H1 (cell line): ENCODE measurements at regions of chr7 and their contacts with region 1.

Region 1: GRCh38 chr7:116236020-116236630 is 25.8 kb downstream of the TES start:
- DNase-seq: no peak
- H3K4me3 ChIP-seq: no peak overlapping the region
- H3K27ac ChIP-seq: no peak overlapping the region
- H3K4me1 ChIP-seq: no peaks in the 10 kb centered on the region; a peak in 1 of 7 replicates
- H3K27me3 ChIP-seq: no peaks in the 10 kb centered on the region
- CTCF ChIP-seq: peak in 1 of 3 experiments; percentile 43; a peak in 1 of 4 replicates
- EP300 ChIP-seq: no peak
- POLR2A ChIP-seq: no peak
- RAD21 ChIP-seq: peak; percentile 69 to 77

Region 2: DNA sequence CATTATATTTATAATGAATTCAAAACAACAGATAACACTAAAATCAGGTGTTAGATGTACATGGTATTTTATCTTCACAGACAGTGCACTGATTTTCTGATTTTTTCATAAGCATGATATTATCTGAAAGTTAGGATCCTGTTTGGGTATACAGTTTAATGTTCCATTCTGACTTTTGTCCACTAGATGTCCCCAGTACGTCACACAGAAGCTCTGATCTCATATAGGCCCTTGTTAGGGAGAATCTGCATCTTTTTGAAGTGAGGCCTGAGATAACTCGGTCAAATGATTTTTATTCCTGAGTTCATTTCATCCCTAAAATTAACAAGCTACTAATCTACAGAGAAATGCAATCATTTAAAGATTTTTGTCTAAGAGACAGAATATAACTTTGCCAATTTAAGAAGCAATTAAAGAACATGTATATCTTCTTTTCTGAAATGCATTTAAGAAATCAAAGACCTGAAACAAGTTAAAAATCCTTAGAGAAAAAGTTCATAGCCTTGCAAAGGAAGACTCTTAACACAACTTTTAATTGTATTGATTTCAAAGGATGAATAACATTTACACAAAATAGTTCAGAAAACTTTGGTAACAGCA is 97.8 kb before region 1 on chr7:
- CTCF ChIA-PET with region 1: interaction called, 20 read pairs
- POLR2A ChIA-PET with region 1: no interaction called
- DNase-seq: no peak
- H3K4me3 ChIP-seq: no peak overlapping the region
- H3K27ac ChIP-seq: no peak overlapping the region
- H3K4me1 ChIP-seq: no peaks in the 10 kb centered on the region
- H3K27me3 ChIP-seq: no peaks in the 10 kb centered on the region
- CTCF ChIP-seq: peak in 2 of 3 experiments; percentile 59 to 70; a peak in 3 of 4 replicates
- EP300 ChIP-seq: no peak
- POLR2A ChIP-seq: no peak
- RAD21 ChIP-seq: peak; percentile 82 to 84

Region 3: DNA sequence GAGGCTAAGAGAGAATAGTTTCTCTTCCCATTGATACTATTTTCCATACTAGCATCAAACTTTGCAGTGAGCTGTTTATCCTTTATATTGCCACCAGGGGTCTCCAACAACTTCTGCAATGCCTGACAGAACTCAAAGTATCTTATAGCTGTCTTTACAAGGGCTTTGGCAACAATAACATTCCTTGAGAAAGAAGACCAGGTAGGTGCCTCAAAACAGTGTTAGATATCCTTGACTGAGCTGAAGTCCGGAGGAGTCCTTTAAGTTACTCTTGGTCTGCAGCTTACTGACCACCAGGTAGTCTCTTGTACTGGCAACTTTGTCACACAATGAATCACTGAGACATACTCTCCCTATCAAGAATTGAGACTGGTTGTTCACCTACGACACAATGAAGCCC is 55.8 kb before region 1 on chr7:
- CTCF ChIA-PET with region 1: interaction called, 175 read pairs
- POLR2A ChIA-PET with region 1: no interaction called
- DNase-seq: peak in 1 of 2 experiments; percentile 48
- H3K4me3 ChIP-seq: no peak overlapping the region
- H3K27ac ChIP-seq: no peak overlapping the region
- H3K4me1 ChIP-seq: no peaks in the 10 kb centered on the region
- H3K27me3 ChIP-seq: no peaks in the 10 kb centered on the region
- CTCF ChIP-seq: peak in 2 of 3 experiments; percentile 70; a peak in 3 of 4 replicates
- EP300 ChIP-seq: no peak
- POLR2A ChIP-seq: no peak
- RAD21 ChIP-seq: peak; percentile 75 to 77

Region 4: DNA sequence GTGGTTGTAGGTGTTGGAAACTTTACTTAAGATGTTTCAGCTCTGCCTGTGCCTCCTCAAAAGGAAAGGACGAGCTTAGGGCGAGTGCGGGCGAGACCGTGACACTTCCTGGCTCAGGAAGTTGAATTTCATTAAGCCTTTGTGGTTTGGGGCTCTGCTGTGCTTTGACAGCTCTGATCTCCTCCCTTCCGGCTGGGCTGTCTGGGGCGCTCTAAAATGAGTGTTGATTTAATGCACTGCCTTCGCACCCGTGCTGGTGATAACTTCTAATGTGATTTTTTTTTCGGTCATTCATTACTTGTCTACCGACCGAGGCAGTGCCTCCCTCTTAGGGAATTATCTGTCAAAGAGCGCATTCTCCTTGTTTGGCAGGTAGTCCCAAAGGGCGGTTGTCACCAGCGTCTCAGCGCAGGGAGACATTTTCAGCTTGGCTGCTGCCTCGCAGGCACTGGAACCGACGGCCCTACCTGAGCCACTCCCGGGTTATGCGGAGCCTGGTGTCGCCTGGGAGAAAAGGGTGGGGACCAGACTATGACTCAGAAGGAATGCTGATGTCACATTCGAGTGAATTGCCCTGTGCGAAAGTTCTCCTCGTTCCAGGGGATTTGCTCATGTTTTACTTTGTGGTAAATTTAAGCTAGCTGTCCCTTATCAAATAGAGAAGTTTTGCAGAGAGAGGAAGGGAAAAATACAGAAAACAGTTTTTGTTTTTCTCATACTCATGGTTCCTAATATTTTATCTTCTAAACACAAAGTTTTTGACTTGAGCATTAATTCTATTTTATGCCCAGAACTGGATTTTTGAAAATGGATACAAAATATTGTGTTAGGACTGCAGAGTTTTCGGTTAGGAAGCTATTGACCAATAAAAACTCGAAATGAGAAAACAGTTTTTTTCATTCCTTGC is 24.9 kb before region 1 on chr7:
- CTCF ChIA-PET with region 1: interaction called, 23 read pairs
- POLR2A ChIA-PET with region 1: interaction called, 6 read pairs
- DNase-seq: peak; percentile 39 to 61
- H3K4me3 ChIP-seq: peak overlapping the region; percentile 69 to 97 (median 90)
- H3K27ac ChIP-seq: no peak overlapping the region
- H3K4me1 ChIP-seq: peaks cover 0 to 3% (median under 1%) of the 10 kb centered on the region in 4 experiments; a peak in 1 of 7 replicates
- H3K27me3 ChIP-seq: peaks cover 0 to 4% (median under 1%) of the 10 kb centered on the region in 4 experiments; a peak in 3 of 7 replicates
- CTCF ChIP-seq: no peak
- EP300 ChIP-seq: no peak
- POLR2A ChIP-seq: peak in 1 of 2 experiments; percentile 52; a peak in 1 of 3 replicates
- RAD21 ChIP-seq: no peak

Region 5: DNA sequence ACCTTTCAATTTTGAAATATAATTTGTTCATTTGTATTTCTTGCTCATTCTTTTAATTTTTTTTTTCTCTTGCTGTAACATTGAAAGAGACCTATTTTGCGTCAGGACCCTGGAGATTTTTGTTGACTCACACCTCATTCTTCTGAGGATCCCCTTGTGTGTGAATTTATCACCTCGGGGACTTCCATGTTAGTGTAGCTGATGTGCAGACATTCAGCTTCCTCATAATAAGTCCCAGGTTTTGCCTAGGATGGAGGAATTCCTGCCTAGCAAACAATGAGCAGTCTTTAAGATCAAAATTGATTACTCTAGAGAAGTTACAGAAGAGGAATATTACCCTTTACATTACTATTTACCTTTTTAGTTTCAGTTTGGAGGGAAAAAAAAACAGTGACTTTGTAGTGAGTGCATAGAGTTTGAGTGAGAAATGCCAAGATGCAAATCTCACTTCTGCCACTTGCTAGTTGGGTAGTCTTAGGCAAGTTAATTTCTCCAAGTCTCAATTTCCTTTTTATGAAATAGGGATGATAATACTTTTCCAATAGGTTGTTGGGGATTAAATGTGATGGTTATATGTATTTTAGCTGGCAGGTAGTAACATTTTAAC is 11.5 kb before region 1 on chr7:
- CTCF ChIA-PET with region 1: interaction called, 31 read pairs
- POLR2A ChIA-PET with region 1: interaction called, 3 read pairs
- DNase-seq: no peak
- H3K4me3 ChIP-seq: no peak overlapping the region
- H3K27ac ChIP-seq: no peak overlapping the region
- H3K4me1 ChIP-seq: no peaks in the 10 kb centered on the region
- H3K27me3 ChIP-seq: no peaks in the 10 kb centered on the region
- CTCF ChIP-seq: no peak
- EP300 ChIP-seq: no peak
- POLR2A ChIP-seq: no peak
- RAD21 ChIP-seq: no peak

Region 6: GRCh38 chr7:116258734-116259133 is 22.6 kb after region 1 on chr7:
- CTCF ChIA-PET with region 1: interaction called, 11 read pairs
- POLR2A ChIA-PET with region 1: interaction called, 4 read pairs
- DNase-seq: no peak
- H3K4me3 ChIP-seq: no peak overlapping the region
- H3K27ac ChIP-seq: no peak overlapping the region
- H3K4me1 ChIP-seq: no peaks in the 10 kb centered on the region
- H3K27me3 ChIP-seq: no peaks in the 10 kb centered on the region
- CTCF ChIP-seq: peak in 2 of 3 experiments; percentile 50 to 58; a peak in 2 of 4 replicates
- EP300 ChIP-seq: no peak
- POLR2A ChIP-seq: no peak
- RAD21 ChIP-seq: peak; percentile 86 to 90

Region 7: GRCh38 chr7:116280803-116281202 is 44.7 kb after region 1 on chr7:
- CTCF ChIA-PET with region 1: no interaction called
- POLR2A ChIA-PET with region 1: no interaction called
- DNase-seq: no peak
- H3K4me3 ChIP-seq: no peak overlapping the region
- H3K27ac ChIP-seq: no peak overlapping the region
- H3K4me1 ChIP-seq: peaks cover 0 to 2% (median 0%) of the 10 kb centered on the region in 4 experiments; a peak in 1 of 7 replicates
- H3K27me3 ChIP-seq: no peaks in the 10 kb centered on the region
- CTCF ChIP-seq: no peak
- EP300 ChIP-seq: no peak
- POLR2A ChIP-seq: no peak
- RAD21 ChIP-seq: no peak